ENCODE measurements at regions of chr5 and their contacts with region 1.

Region 1: GRCh38 chr5:36241631-36242533 is at the start of gene NADK2:
- DNase-seq: peak; percentile 82
- H3K4me3 ChIP-seq: peak within 1 kb of the TSS; percentile 73
- H3K27ac ChIP-seq: peak within 1 kb of the TSS; percentile 91
- H3K27me3 ChIP-seq: no peaks in the 10 kb centered on the region
- CTCF ChIP-seq: peak; percentile 63
- polyA plus RNA-seq, gene NADK2: 13.0 and 18.5 TPM in 2 replicates

Region 2: DNA sequence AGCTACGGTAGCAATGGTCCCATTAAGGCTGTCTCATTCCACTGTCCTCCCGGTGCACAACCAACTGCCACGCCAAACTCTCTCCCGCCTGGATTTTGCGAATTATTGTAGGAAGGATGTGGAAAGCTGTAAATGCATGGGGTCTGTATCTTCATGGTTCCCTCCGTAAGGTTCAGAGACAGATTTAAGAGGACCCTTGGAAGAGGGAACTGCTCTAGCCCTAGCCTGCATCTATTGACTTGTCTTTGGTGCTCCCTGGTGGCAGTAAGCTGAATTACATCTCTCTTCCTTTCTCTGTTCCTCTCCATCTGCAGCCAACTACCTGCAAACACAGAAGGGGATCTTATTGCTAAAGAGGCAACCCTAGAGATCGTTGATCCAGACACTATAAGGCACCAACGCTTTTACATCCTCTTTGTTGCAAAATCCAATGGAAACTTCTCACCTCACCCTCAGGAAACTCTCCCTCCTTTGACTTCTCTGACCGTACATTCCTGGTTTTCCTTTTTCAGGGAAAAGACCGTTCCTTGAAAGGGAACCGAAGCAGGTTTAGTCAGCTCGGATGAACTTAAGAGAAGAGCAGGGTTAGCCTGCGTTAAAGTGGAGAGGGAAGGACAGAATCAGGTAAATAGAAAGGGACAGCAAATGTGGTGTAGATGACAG is 315.4 kb before region 1 on chr5:
- CTCF ChIA-PET with region 1: no interaction called
- POLR2A ChIA-PET with region 1: no interaction called
- DNase-seq: no peak
- H3K4me3 ChIP-seq: no peak overlapping the region
- H3K27ac ChIP-seq: peak overlapping the region; percentile 1
- H3K27me3 ChIP-seq: no peaks in the 10 kb centered on the region
- CTCF ChIP-seq: peak; percentile 88

Region 3: DNA sequence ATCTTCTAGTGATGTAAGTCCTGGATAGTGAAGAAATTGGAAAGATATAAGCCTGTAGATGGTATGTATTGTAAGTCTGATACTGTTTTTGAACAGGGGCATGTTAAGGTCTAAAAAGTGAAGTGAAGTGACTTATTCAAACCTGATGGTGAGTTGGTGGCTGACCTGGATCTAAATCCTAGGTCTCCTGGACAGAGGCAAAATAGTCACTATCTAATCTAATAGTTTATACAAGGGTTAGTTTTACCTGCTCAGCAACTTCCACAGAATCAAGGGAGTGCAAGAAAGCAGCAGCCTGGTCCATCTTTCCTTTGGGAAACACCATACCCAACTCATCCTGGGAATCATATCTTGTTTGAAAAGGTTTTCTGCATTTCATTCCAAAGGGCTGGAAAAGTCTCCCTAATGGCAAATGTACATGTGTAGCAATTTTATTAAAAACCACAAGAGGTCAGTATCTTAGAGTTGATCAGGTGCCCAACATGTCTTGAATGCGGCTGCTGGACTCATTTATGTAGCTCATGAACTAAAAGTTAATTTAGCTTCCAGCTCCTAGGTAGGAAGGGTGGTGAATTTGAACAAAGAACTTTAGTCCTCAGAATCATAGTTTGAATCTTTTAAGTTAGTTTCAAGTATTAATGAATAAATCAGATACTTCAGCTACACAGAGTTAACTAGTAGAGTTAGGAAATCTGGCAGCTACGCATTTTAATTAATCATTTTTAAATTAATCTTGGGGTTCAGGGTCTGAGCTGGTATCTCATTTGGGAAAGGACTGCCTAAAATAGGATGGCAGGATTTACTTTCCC is 64.0 kb before region 1 on chr5:
- CTCF ChIA-PET with region 1: interaction called, 17 read pairs
- POLR2A ChIA-PET with region 1: interaction called, 6 read pairs
- DNase-seq: peak; percentile 15
- H3K4me3 ChIP-seq: no peak overlapping the region
- H3K27ac ChIP-seq: no peak overlapping the region
- H3K27me3 ChIP-seq: no peaks in the 10 kb centered on the region
- CTCF ChIP-seq: peak; percentile 68

Region 4: DNA sequence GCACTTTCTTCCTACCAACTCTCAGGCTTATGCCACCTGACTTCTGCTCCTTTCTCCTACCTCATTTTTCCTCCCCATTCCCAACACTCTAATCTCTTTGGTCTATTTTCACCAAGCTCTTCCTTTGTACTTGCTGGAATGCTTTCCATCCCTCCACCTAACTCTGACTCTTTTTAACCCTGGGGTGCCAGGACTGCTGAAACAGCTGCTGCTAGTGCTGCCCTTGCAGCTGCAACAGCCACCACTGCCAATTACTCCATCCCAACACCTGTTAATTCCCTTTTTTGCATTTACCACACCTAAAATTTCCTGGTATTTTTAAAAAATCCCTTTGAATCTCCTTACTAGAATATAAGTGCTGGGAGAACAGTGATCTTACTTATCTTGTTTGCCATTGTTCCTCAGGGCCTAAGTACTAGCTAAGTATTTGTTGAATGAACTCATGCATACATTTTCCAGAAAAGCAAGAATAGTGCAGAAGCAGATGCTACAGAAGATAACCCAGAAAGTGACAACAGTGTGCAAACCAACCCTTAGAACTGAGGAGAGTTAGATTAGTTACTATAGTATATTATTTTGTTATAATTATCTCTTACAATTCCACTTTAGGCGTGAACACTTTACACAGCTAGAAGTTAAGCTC is 11.6 kb before region 1 on chr5:
- CTCF ChIA-PET with region 1: interaction called, 28 read pairs
- POLR2A ChIA-PET with region 1: interaction called, 17 read pairs
- DNase-seq: no peak
- H3K4me3 ChIP-seq: no peak overlapping the region
- H3K27ac ChIP-seq: no peak overlapping the region
- H3K27me3 ChIP-seq: no peaks in the 10 kb centered on the region
- CTCF ChIP-seq: no peak

Region 5: GRCh38 chr5:36264202-36264760 is 22.4 kb after region 1 on chr5:
- CTCF ChIA-PET with region 1: interaction called, 16 read pairs
- POLR2A ChIA-PET with region 1: interaction called, 7 read pairs
- DNase-seq: no peak
- H3K4me3 ChIP-seq: no peak overlapping the region
- H3K27ac ChIP-seq: no peak overlapping the region
- H3K27me3 ChIP-seq: no peaks in the 10 kb centered on the region
- CTCF ChIP-seq: no peak

Region 6: DNA sequence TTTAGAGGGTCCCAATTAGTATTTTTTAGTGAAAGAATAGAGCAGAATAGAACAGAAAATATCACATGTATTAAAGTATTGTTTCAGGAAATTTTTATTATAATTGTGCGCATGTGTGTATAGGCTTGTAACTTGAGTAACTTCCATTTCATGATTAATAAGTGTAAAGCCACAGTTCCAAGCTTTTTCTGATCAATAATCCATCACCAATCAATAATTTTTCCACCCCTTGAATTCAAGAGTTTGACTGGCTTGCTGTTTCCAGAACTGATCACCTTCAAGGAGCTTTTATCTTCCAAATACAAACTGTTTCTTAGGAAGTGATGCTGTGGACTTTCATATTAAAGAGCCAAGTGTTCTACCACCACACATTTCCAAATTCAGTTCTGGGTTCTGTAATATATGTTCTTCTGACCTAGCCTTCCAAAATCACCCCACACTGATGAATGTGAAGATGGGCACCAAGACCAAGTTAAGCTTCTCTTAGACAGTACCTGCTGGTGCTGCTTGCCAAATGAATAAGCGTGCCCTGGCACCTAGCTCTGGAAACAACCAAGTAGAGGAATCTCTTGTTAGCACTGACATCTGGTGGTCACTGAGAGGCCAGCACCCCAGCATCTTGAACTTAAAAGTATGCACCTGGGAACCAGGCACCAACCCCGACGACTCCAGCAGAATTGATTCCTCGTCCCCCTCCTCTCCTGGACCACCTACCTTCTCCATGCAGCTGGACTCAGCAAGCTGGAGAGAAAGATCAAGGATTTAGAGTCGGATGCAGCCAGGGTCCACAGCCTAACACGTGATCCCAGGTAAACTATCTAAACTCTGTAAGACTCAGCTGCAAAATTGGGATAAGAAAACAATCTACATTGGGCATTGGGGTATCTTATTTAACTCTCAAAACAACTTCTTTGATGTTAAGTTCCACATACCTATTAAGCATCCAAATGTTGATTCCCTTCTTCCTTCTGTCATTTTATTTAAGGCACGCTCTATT is 454.1 kb after region 1 on chr5:
- CTCF ChIA-PET with region 1: interaction called, 19 read pairs
- POLR2A ChIA-PET with region 1: no interaction called
- DNase-seq: peak; percentile 21
- H3K4me3 ChIP-seq: no peak overlapping the region
- H3K27ac ChIP-seq: no peak overlapping the region
- H3K27me3 ChIP-seq: peaks cover 7% of the 10 kb centered on the region
- CTCF ChIP-seq: peak; percentile 85

Measured in AG04450 (cell line).